Endothelial cell of umbilical vein (primary cell): ENCODE measurements at regions of chr3 and their contacts with region 1.

Region 1: GRCh38 chr3:114336122-114336697 is 42.4 kb downstream of the TIGIT start:
- DNase-seq: peak; percentile 18
- H3K4me3 ChIP-seq: no peak overlapping the region
- H3K27ac ChIP-seq: no peak overlapping the region
- H3K4me1 ChIP-seq: no peaks in the 10 kb centered on the region
- H3K27me3 ChIP-seq: no peaks in the 10 kb centered on the region
- CTCF ChIP-seq: peak; percentile 15 to 31
- POLR2A ChIP-seq: no peak

Region 2: DNA sequence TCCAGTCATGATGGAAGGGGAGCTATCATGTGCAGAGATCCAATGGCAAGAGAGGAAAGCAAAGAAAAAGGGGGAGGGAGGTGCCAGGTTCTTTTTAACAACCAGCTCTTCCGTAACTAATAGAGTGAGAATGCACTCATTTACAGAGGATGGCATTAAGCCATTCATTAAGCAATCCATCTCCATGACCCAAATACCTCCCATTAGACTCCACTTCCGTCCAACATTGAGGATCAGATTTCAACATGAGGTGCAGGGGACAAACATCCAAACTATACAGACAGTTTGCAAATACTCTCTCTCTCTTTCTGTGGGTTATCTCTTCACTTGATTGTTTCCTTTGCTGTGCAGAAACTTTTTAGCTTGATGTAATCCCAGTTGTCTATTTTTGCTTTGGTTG is 367.2 kb before region 1 on chr3:
- CTCF ChIA-PET with region 1: no interaction called
- POLR2A ChIA-PET with region 1: no interaction called
- dilution Hi-C with region 1: no loop called
- intact Hi-C with region 1: no loop called
- DNase-seq: no peak
- H3K4me3 ChIP-seq: no peak overlapping the region
- H3K27ac ChIP-seq: no peak overlapping the region
- H3K4me1 ChIP-seq: no peaks in the 10 kb centered on the region
- H3K27me3 ChIP-seq: no peaks in the 10 kb centered on the region
- CTCF ChIP-seq: no peak
- POLR2A ChIP-seq: no peak

Region 3: DNA sequence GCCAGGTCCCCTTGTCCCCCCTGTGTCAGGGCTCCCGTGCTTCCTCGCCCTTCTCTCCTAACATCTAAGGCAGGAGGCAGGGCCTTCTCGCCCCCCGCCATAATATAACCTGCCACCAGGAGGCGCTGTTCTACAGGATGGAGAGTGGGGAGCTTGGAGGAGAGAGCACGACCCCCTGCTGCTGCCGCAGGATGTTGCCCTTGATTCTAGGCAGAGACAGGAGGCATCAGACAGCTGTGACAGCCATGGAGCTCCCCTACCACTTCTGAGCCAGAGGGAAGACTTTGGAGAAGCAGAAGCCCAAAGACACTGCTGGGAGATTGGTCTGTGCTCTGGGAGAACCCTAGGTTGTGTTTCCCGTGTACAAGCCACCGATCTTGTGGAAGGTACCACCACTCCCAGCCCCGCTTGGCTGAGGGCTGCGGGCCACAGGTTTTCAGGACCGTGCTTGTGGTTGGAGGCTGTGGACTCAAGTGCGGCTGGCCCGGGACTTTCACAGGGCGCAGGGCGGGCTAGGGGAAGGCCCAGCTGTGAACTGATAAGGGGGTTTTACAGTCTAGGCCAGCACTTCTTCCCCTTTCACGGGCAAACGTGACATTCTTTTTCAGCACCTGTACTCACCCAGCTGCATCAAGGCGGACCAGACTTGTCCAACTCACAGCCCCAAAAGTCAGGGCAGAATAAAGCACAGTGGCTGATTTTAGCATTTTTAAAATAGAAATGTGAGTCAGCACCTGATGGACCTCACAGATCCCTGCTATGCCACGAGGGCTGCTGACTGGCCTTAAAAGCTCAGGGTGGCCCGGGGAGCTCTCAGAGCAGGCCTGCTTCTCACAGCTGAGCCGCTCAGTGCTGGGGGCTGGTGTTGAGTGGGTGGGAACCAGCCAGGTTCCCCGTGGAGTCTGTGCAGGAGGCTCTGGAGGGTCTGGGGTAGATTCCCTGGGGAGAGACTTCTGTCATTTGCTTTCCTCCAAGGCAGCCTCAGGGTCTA is 45.0 kb before region 1 on chr3:
- CTCF ChIA-PET with region 1: interaction called, 9 read pairs
- POLR2A ChIA-PET with region 1: no interaction called
- dilution Hi-C with region 1: no loop called
- intact Hi-C with region 1: loop called (anchors 2 kb)
- DNase-seq: peak; percentile 50
- H3K4me3 ChIP-seq: no peak overlapping the region
- H3K27ac ChIP-seq: no peak overlapping the region
- H3K4me1 ChIP-seq: no peaks in the 10 kb centered on the region
- H3K27me3 ChIP-seq: peaks cover 2% of the 10 kb centered on the region in 2 experiments
- CTCF ChIP-seq: peak; percentile 76 to 80
- POLR2A ChIP-seq: no peak

Region 4: DNA sequence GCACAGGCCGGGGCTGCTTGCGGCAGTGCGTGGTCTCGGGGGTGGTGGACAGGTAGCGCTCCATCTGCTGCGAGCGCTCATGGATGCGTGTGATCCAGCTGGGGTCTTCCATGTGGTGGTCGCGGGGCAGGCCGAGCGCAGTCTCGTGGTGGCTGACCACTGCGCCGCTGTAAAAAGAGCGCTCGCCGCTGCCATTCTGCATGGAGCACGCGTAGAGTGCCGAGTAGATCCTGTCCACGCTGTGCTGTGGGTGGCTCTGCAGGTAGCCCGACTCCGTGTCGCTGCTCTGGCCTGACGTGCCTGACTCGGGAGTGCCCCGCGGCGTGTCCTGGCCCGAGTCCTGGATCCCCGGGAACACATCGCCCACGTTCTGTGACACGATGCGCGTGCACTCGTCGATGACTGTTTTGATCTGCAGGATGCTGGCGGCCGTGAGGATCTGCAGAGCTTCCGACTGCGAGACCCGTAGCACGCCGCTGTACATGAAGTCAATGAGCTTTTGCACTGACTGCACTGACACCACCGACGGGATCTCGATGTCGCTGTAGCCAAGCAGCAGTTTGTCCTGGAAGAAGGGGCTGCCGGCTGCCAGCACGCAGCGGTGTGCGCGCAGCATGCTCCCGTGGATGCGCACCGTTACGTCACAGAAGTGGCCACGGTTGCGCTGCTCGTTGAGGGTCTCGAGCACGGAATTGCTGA is 15.1 kb after region 1 on chr3:
- CTCF ChIA-PET with region 1: interaction called, 3 read pairs
- POLR2A ChIA-PET with region 1: no interaction called
- dilution Hi-C with region 1: no loop called
- intact Hi-C with region 1: loop called (anchors 1 kb)
- DNase-seq: no peak
- H3K4me3 ChIP-seq: no peak overlapping the region
- H3K27ac ChIP-seq: no peak overlapping the region
- H3K4me1 ChIP-seq: no peaks in the 10 kb centered on the region
- H3K27me3 ChIP-seq: no peaks in the 10 kb centered on the region
- CTCF ChIP-seq: no peak
- POLR2A ChIP-seq: no peak